ENCODE measurements at regions of chr10 and their contacts with region 1.

Region 1: DNA sequence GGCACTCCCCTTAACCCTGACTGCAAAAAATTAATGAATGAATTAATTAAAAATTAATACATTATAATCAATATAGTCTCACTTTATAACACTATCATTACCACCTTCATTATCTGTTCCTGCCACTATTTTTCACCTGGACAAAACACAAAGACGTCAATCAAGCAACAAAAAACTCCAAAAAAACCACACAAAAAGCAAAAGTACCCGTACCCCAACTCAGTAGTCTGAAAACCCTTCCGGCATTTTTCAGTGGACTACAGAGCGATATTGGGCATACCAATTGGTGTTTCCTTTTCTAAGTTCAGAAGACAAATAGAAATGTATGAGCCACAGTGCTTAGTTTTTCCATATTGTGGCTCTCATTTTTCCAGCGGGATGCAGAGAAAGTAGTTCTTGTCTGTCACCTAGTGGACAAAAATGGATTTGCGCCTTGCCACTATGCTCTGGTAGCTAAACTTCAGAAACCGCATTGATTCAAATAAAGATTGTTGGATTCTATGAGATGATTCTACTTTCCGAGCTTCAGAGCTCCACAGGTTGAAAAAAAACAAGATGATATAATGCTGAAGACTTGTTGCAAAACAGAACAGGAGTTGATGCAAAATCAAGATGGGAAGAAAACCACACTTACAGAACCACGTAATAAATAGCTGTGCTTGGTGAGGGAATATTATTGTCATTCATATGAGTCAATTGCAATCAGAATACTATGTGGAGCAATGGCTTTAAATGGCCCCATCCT is 50.6 kb upstream of the ITGB1 start:
- DNase-seq: peak in 5 of 10 donors; percentile 18 to 57 (median 49)

Region 2: DNA sequence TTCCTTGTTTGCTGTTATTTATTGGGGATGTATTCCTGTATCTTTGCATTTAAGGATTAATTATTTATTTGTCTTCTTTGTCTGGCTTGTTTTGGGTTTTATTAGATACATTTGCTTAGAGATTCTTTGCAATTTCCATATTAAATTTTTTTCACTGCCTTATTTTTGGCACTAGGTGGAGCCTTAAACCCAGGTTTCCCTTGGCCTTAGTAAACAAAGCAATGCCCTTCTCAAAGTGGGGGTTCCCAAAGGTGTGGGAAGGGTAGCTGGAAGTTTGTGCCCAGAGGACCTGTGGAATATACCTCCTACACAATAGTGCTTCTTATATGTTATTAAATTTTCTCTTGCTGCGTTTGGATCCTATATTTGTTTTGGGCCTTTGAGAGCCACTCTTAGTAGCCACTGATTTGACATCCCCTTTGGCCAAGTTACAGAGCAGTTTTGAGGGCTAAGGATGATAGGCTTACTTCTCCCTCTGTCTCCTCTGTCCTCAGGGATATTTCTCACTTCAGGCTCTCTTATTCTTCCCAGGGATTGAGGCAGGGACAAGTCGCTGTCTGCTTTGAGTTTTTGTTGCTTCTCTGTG is 213.0 kb before region 1 on chr10:
- intact Hi-C with region 1: loop called (anchors 1 kb)
- DNase-seq: no peak

Region 3: DNA sequence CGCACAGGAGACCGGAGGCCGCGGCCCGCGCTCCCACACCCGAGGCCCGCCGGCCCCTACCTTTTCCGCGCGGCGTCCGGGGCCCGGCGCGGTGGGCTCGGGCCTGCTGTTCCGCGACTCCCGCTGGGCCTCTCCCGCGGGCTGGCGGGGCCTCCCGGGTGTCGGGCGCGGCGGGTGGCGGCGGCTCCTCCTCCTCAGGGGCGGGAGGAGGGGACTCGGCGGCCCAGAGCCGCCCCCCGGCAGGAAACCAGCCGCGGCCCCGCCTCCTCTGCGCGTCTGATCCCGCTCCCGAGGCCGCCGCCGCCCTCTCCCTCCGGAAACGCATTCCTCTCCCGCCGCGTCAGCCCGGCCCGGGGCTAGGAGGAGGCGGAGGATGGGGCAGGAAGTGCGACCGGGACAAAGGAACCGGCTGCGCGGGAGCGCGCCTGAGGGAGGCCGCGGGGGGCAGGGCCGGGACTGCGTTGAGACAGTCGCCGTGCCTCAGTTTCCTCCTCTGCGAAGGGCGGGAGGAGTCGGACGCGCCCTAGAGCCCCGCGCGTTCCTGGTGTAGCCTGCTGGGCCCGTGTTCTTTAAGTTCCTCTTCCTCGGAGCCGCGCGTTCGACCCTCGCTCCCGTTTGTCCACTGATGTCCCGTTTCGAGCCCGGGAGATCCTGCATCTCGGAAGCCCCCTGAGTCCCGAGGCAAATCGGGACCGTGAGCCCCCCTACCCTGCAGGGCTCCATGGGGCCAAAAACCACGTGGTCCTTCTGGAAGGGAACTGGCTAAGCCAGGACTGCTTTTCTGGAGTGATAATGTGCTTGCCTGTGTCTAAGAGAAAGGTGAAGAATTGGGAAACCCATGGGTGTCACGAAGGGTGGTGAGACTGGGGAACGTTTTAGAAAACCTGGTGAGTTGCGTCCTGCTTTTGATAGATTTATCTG is 50.3 kb before region 1 on chr10 and contains the start of gene ITGB1:
- intact Hi-C with region 1: loop called (anchors 5 kb)
- DNase-seq: peak; percentile 88 to 99 (median 96)

Region 4: GRCh38 chr10:32980558-32981468 is 27.9 kb before region 1 on chr10:
- intact Hi-C with region 1: no loop called
- DNase-seq: peak; percentile 69 to 98 (median 91)